HEK293T (cell line): ENCODE measurements at regions of chr6 and their contacts with region 1.

Region 1: DNA sequence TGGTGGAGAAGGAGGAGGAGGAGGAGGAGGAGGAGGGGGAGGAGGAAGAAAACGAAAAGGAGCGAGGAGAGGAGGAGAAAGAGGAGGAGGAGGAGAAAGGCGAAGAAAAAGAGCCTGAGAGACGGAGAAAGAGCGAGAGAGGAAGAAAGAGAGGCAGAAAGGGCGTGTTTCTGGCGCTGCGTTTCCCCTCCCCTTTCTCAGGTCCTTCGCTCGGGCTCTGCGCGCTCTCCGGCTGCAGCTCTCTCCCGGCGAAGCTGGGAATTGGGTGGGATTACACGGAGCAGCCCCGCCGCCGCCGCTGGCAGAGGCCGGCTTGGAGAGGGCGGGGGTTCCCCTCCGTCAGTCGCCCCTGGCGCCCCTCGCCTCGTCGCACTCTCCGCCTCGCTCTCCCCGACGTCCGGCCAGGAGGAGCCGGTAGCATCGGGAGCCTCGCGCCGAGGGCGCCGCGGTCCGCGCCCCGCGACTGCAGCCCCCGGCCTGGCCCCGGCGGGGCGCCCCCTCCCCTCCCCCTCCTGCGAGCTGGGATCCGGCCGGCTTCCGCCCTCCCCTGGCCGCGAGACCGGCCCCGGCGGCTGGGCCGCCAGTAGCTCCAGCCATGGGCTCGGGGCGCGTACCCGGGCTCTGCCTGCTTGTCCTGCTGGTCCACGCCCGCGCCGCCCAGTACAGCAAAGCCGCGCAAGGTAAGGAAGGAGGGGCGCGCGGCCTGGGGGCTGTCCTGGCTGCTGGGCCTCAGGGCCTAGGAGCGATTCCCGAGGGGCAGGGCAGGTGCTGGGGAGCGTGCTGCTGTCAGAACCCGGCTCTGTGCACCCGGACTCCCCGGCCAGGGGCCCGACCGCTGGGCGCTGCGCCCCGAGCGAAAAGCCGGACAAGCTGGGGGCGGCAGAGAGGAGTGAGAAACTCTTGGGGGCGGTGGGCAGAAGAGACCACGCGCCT is at the start of gene SCUBE3:
- DNase-seq: peak; percentile 69

Region 2: GRCh38 chr6:35181933-35182612 is 32.0 kb before region 1 on chr6:
- CTCF ChIA-PET with region 1: no interaction called
- POLR2A ChIA-PET with region 1: no interaction called
- DNase-seq: no peak

Region 3: DNA sequence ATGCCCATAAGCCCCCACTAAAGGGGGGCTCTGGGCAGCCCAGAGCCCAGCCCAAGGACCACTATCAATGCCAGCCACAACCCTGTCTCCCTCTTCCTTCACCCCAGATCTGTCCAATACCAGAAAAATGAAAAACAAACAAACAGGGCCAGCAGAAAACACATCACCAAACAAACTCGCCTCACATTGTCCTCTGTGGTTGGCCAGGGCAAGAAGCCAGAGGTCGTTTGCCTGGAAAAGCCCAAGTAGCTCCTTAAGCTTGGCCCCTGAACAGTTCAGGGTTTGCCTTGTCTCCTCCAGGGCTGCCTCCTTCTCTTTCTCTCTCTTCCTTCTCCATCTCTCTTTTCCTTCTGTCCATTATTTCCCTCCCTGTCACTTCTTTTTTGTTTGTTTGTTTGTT is 10.4 kb before region 1 on chr6:
- CTCF ChIA-PET with region 1: interaction called, 20 read pairs
- POLR2A ChIA-PET with region 1: no interaction called
- DNase-seq: no peak

Region 4: GRCh38 chr6:35259194-35259947 is 45.3 kb after region 1 on chr6 and contains the start of gene ZNF76:
- CTCF ChIA-PET with region 1: no interaction called
- POLR2A ChIA-PET with region 1: interaction called, 10 read pairs
- DNase-seq: peak; percentile 99